Tibial artery (tissue), 4 donors: ENCODE measurements at regions of chr12 and their contacts with region 1.

Region 1: GRCh38 chr12:3609881-3610280 is 118.9 kb downstream of the PRMT8 start:
- DNase-seq: no peak
- H3K4me3 ChIP-seq: no peak overlapping the region
- H3K27ac ChIP-seq: no peak overlapping the region
- H3K4me1 ChIP-seq: peaks cover 0 to 13% (median 5%) of the 10 kb centered on the region in 4 donors
- H3K27me3 ChIP-seq: no peaks in the 10 kb centered on the region
- CTCF ChIP-seq: no peak

Region 2: DNA sequence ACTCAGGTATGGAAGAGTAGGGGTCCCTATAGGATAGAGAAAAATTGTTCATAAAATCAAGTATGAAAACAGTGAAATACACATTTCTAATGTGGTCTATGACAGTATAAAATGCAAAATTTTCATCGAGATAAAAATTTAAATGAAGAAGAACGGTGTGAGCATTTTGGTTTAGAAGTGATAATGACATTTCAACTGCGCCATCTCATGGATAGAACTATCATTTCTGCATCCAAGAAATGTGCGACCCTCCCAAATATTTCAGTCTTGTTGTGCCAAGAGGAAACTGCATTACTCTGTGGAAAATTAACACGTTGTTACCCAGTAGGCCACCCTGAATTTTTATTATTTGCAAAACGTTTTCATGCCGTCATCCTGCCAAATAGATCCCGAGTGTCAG is 34.2 kb after region 1 on chr12:
- intact Hi-C with region 1: no loop called
- DNase-seq: no peak
- H3K4me3 ChIP-seq: no peak overlapping the region
- H3K27ac ChIP-seq: no peak overlapping the region
- H3K4me1 ChIP-seq: no peaks in the 10 kb centered on the region
- H3K27me3 ChIP-seq: no peaks in the 10 kb centered on the region
- CTCF ChIP-seq: no peak

Region 3: DNA sequence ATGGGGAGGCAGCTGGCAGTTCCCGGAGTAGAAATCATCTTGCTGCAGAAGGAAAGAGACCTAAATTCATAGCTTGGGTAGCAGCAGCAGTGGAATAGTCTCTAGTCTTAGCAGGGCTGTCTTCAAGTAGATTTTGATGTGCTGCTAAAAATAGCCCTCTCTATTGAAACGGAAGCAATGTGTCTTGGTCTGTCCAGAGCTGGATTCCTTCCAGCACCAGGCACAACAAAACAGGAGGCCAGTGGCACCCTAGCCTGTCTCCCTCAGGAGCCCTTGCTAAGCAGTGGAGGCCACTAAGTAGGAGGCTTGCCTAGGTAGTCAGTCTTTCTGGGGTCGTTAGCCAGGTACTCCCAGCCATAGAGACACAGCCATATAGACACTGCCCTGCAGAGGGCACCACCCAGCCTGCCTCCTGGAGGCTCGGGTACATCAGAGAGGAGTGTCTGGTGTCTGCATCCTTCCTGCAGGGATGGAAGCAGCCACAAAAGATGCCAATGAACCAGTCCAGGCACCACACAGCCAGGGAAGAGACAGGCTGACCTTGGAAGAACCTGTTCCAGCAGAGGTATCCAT is 45.5 kb after region 1 on chr12:
- intact Hi-C with region 1: loop called (anchors 1 kb)
- DNase-seq: no peak
- H3K4me3 ChIP-seq: no peak overlapping the region
- H3K27ac ChIP-seq: no peak overlapping the region
- H3K4me1 ChIP-seq: peaks cover 0 to 6% (median 0%) of the 10 kb centered on the region in 4 donors
- H3K27me3 ChIP-seq: no peaks in the 10 kb centered on the region
- CTCF ChIP-seq: no peak

Region 4: DNA sequence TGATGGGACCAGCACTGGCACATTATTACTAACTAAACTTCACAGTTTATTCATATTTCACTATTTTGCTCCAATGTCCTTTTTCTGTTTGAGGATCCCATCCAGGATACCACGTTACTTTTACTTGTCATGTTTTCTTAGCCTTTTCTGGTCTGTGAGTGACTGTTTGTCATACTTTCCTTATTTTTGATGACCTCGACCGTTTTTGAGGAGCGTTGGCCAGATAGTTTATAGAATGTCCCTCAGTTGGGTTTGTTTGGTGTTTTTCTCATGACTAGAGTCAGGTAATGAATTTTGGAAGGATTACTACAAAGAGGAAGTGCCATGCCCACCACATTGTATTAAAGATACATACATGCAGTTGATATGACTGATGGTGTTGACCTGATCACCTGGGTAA is 464.2 kb after region 1 on chr12:
- intact Hi-C with region 1: no loop called
- DNase-seq: no peak
- H3K4me3 ChIP-seq: no peak overlapping the region
- H3K27ac ChIP-seq: no peak overlapping the region
- H3K4me1 ChIP-seq: no peaks in the 10 kb centered on the region
- H3K27me3 ChIP-seq: no peaks in the 10 kb centered on the region
- CTCF ChIP-seq: no peak